ENCODE measurements at regions of chr2 and their contacts with region 1.

Region 1: GRCh38 chr2:224469374-224469964 is 67.6 kb upstream of the FAM124B start:
- DNase-seq: no peak
- H3K4me3 ChIP-seq: no peak overlapping the region
- H3K27ac ChIP-seq: no peak overlapping the region
- H3K4me1 ChIP-seq: peaks cover 8% of the 10 kb centered on the region
- H3K27me3 ChIP-seq: no peaks in the 10 kb centered on the region
- CTCF ChIP-seq: no peak

Region 2: GRCh38 chr2:224062481-224063297 is 406.8 kb before region 1 on chr2:
- CTCF ChIA-PET with region 1: interaction called, 12 read pairs
- POLR2A ChIA-PET with region 1: no interaction called
- intact Hi-C with region 1: no loop called
- DNase-seq: no peak
- H3K4me3 ChIP-seq: no peak overlapping the region
- H3K27ac ChIP-seq: peak overlapping the region; percentile 2
- H3K4me1 ChIP-seq: peaks cover 18% of the 10 kb centered on the region
- H3K27me3 ChIP-seq: no peaks in the 10 kb centered on the region
- CTCF ChIP-seq: peak; percentile 48

Measured in A673 (cell line).